Activated T-helper 1 cell treated with anti-CD3 and anti-CD28 coated beads, Interleukin-12 subunit alpha, Interleukin-12 subunit beta, Interleukin-2, Interleukin-4 antibody, amounts not matched to agents 30 ng/mL and 10 ng/mL and 1 ng/mL, durations not matched to agents 14 hours and 24 hours and 36 hours (primary cell): ENCODE measurements at regions of chr11 and their contacts with region 1.

Region 1: GRCh38 chr11:117621226-117621625 is 175.8 kb downstream of the DSCAML1 start:
- DNase-seq: no peak
- H3K4me3 Mint-ChIP-seq: no peak overlapping the region
- H3K27ac Mint-ChIP-seq: no peak overlapping the region
- H3K4me1 Mint-ChIP-seq: no peaks in the 10 kb centered on the region
- H3K27me3 Mint-ChIP-seq: peaks cover 2% of the 10 kb centered on the region

Region 2: DNA sequence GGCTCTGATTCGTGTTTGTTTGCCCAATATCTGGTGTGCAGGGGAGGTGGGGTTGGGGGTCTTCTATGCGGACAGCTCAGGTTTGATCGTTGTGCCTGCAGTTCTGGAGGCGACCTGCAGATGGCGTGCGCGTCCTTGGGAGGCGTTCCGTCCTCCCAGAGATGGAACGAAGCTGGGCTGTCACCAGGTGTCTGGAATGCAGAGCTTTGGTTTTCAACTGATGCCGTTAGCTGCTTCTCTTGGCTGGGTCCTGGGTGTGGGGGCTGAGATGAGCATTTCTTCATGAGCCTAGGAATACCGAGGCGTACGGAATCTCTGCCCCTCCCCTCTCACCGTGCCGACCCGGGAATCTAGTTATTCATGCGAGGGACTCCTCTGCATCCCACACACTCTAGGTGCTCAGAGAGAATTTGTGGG is 194.9 kb before region 1 on chr11:
- intact Hi-C with region 1: loop called (anchors 1 kb)
- DNase-seq: peak; percentile 44
- H3K4me3 Mint-ChIP-seq: no peak overlapping the region
- H3K27ac Mint-ChIP-seq: no peak overlapping the region
- H3K4me1 Mint-ChIP-seq: no peaks in the 10 kb centered on the region
- H3K27me3 Mint-ChIP-seq: peaks cover 3% of the 10 kb centered on the region

Region 3: GRCh38 chr11:117610045-117610444 is 11.2 kb before region 1 on chr11:
- intact Hi-C with region 1: no loop called
- DNase-seq: peak; percentile 25
- H3K4me3 Mint-ChIP-seq: no peak overlapping the region
- H3K27ac Mint-ChIP-seq: peak overlapping the region; percentile 11
- H3K4me1 Mint-ChIP-seq: peaks cover 39% of the 10 kb centered on the region
- H3K27me3 Mint-ChIP-seq: peaks cover 12% of the 10 kb centered on the region

Region 4: DNA sequence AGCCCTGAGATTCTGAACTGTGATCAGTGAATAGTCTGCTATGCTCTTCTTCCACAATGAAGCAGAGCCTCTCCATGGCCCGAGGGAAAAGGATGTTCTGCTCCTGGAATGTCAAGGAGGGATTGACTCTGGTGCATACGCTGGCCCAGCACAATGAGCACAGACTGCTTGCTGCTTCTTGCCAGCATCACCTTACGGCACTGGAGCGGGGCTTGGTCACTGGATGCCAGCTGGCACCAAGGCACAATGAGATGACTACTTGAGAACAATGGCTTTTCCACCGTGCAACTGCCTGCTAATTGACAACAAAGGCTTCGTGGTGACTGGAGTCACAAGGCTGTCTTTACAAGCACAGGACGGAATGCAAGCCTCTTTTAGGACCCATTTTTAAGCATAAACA is 36.6 kb after region 1 on chr11:
- intact Hi-C with region 1: loop called (anchors 1 kb)
- DNase-seq: no peak
- H3K4me3 Mint-ChIP-seq: no peak overlapping the region
- H3K27ac Mint-ChIP-seq: no peak overlapping the region
- H3K4me1 Mint-ChIP-seq: no peaks in the 10 kb centered on the region
- H3K27me3 Mint-ChIP-seq: peaks cover 4% of the 10 kb centered on the region

Region 5: DNA sequence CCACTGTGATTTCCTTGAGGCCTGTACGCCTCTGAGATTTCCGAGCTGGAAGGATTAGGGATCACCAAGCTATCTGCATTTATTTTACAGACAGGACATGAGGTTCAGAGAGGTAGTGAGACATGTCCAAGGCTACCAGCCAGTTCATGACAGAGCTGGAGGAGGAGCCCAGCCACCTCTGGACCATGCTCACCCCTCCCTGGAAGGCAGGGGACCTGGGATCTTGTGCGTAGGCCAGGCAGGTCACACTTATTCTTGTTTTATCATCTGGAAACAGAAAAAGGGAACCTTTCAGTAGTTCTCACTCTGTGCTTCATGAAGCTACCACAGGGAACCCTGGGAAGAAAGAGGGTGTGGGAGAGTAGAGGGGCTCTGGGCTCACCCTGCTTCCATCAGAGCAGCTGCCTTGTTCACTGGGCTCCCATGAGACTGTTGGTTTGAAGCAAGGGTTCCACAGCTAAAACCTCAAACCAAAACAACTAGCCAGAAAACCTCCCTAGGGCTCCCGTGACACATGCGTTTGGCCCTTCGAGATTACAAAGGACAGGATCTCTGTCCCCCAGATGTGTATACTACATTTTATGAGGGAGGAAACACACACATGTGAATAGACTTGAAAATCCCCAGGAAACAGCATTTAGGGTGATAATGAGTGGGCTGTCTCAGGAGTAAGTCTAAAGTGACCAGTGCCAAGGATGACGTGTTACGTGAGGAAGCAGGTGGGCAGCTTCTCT is 69.4 kb after region 1 on chr11:
- intact Hi-C with region 1: no loop called
- DNase-seq: no peak
- H3K4me3 Mint-ChIP-seq: no peak overlapping the region
- H3K27ac Mint-ChIP-seq: no peak overlapping the region
- H3K4me1 Mint-ChIP-seq: no peaks in the 10 kb centered on the region
- H3K27me3 Mint-ChIP-seq: peaks cover 7% of the 10 kb centered on the region

Region 6: GRCh38 chr11:117781627-117782026 is 160.4 kb after region 1 on chr11:
- intact Hi-C with region 1: no loop called
- DNase-seq: no peak
- H3K4me3 Mint-ChIP-seq: no peak overlapping the region
- H3K27ac Mint-ChIP-seq: no peak overlapping the region
- H3K4me1 Mint-ChIP-seq: no peaks in the 10 kb centered on the region
- H3K27me3 Mint-ChIP-seq: peaks cover 12% of the 10 kb centered on the region